MCF 10A (cell line): ENCODE measurements at regions of chr14 and their contacts with region 1.

Region 1: DNA sequence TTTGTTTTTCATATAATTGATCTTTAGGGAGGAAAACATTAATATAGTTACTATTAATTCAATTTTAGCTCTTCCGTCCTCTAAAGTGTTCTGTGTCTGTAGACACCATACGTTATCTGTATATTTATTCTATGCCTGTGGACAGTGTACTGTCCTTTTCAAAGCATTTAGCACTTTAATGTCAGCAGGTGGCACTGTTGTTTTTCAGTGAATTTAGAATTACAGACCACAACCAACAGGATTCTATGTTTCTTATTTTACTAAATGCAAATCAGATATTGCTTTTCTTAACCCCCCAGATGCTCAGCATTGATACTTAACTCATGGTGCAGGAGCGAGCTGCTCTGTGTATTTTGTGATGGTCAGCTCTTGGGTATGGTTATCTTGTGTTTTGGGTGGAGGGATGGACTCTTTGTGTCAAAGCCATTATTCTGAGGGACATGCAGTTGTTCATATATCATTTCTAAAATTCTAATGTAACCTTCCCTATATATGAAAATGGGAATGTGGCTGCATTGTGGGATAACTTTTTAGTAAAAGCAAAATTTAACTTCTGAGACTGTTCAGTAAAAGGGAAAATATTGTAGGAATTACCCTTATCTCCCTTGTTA is 65.2 kb downstream of the PAPOLA start:
- DNase-seq: peak; percentile 31
- H3K4me3 Mint-ChIP-seq: no peak overlapping the region
- H3K27ac Mint-ChIP-seq: no peak overlapping the region
- H3K4me1 Mint-ChIP-seq: no peaks in the 10 kb centered on the region
- H3K27me3 Mint-ChIP-seq: no peaks in the 10 kb centered on the region
- CTCF ChIP-seq: peak; percentile 60

Region 2: DNA sequence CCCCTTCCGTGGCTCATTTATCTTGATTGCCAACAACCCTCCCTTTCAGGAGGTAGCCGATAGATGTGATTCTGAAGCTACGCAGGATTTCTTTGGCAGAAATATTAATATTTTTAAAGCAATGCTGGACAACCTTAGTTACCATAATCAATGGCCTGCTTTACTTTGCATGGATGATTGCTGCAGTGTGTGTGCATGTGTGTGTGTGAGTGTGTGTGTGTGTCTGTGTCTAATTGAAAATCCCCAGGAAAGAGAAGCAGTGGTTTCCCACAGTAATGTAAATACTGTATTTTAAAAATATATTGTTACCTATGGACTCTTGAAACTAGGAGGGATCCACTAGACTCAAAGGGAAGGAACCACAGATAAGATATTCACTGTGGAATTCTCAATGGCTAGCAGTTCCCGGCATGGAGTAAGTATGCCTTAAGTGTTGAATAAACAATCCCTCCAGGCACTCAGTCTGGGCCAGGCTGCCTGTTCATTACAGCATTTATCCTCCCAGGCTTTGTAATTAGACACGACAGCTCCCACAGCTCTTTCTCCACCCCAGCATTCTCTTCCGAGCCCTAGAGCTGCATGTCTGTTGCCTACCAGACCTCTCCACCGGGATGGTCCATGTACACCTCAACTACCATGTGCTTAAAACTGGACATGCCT is 550.8 kb before region 1 on chr14:
- CTCF ChIA-PET with region 1: no interaction called
- POLR2A ChIA-PET with region 1: no interaction called
- intact Hi-C with region 1: no loop called
- DNase-seq: no peak
- H3K4me3 Mint-ChIP-seq: no peak overlapping the region
- H3K27ac Mint-ChIP-seq: no peak overlapping the region
- H3K4me1 Mint-ChIP-seq: no peaks in the 10 kb centered on the region
- H3K27me3 Mint-ChIP-seq: peaks cover 68% of the 10 kb centered on the region
- CTCF ChIP-seq: no peak

Region 3: DNA sequence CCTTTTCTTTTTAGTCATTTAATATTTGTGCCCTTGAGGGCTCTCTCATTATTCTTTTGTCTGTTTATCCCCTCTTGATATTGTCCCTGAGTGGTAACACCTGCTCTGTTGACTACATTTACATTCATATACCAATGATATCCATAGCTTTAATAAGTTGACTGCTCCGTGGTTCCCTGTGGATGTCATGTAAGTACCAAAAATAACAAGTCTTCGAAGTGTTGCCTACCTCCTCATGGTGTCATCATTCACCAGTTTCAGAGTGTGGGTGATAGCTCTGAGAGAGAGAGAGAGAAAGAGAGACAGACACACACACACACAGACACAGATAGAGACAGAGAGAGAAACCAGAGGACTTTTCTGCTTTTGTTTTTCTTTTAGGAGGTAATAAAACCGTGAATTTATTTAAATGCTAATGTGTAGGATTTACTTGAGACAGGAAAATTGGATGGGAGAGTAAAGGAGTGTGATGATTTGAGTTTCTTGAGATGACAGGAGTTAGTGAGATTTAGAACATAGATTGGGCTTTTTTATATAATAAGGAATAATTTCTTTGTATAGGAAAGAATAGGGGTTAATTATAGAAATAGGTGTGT is 13.0 kb before region 1 on chr14:
- CTCF ChIA-PET with region 1: interaction called, 10 read pairs
- POLR2A ChIA-PET with region 1: interaction called, 4 read pairs
- intact Hi-C with region 1: no loop called
- DNase-seq: no peak
- H3K4me3 Mint-ChIP-seq: no peak overlapping the region
- H3K27ac Mint-ChIP-seq: peak overlapping the region; percentile 17
- H3K4me1 Mint-ChIP-seq: no peaks in the 10 kb centered on the region
- H3K27me3 Mint-ChIP-seq: no peaks in the 10 kb centered on the region
- CTCF ChIP-seq: no peak

Region 4: DNA sequence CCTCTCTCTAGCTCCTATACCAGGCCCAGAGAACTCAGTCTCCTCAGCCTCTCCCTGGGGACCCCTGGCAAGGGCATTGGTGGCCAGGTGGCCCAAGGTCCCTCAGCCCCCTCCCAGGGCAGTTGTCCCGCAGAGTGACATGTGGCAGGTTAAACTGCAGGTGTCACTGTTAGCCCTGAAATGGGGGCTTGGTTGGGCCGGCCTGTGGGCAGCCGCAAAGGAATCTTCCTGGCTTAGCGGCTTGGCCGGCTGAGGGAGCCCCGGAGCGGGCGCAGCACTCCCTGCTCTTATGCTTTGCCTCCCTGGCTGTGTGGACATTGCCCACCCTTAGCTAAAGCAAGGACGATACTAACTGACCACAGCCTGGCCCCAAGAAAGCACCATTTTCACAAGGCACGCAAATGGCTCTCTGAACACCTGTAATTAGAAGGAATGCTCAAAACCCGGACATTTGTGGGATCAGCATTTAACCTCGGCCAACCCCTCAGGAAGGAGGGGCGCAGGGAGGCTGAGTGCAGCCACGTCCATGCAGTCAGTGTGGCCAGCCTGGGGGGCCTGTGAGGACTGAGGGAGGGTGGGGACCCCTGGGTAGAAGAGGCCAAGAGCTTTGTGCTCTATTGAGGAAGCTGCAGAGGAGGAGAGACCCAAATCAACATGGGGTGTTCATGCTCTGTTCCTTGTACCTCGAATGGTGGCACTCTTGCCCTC is 17.0 kb after region 1 on chr14:
- CTCF ChIA-PET with region 1: interaction called, 46 read pairs
- POLR2A ChIA-PET with region 1: interaction called, 3 read pairs
- intact Hi-C with region 1: no loop called
- DNase-seq: peak; percentile 61
- H3K4me3 Mint-ChIP-seq: no peak overlapping the region
- H3K27ac Mint-ChIP-seq: no peak overlapping the region
- H3K4me1 Mint-ChIP-seq: no peaks in the 10 kb centered on the region
- H3K27me3 Mint-ChIP-seq: no peaks in the 10 kb centered on the region
- CTCF ChIP-seq: peak; percentile 44

Region 5: GRCh38 chr14:96688629-96689028 is 121.2 kb after region 1 on chr14:
- CTCF ChIA-PET with region 1: no interaction called
- POLR2A ChIA-PET with region 1: no interaction called
- intact Hi-C with region 1: no loop called
- DNase-seq: no peak
- H3K4me3 Mint-ChIP-seq: no peak overlapping the region
- H3K27ac Mint-ChIP-seq: no peak overlapping the region
- H3K4me1 Mint-ChIP-seq: no peaks in the 10 kb centered on the region
- H3K27me3 Mint-ChIP-seq: peaks cover 27% of the 10 kb centered on the region
- CTCF ChIP-seq: no peak

Region 6: GRCh38 chr14:96741151-96741977 is 174.0 kb after region 1 on chr14:
- CTCF ChIA-PET with region 1: interaction called, 42 read pairs
- POLR2A ChIA-PET with region 1: interaction called, 4 read pairs
- intact Hi-C with region 1: loop called (anchors 5 kb)
- DNase-seq: peak; percentile 43
- H3K4me3 Mint-ChIP-seq: peak overlapping the region; percentile 79
- H3K27ac Mint-ChIP-seq: no peak overlapping the region
- H3K4me1 Mint-ChIP-seq: peaks cover 6% of the 10 kb centered on the region
- H3K27me3 Mint-ChIP-seq: peaks cover 62% of the 10 kb centered on the region
- CTCF ChIP-seq: peak; percentile 96

Region 7: DNA sequence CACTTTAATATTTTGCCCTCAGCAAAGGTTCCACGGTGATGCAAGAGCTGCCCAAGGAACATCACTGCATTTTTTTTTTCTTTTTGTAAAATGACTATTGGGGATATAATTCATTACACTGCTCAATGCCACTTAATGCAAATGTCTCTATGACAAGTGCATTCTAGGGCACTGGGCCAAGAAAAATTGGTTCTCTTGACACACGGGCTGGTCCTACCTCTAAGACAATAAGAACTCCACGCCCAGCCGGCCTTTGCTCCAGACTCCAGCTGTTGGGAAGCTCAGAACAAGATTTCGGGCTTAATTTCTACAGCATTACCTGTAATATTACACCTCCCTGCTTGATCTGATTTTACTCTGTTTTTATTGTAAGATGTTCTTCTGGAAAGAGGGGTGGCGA is 181.0 kb after region 1 on chr14:
- CTCF ChIA-PET with region 1: interaction called, 11 read pairs
- POLR2A ChIA-PET with region 1: no interaction called
- intact Hi-C with region 1: loop called (anchors 5 kb)
- DNase-seq: peak; percentile 38
- H3K4me3 Mint-ChIP-seq: no peak overlapping the region
- H3K27ac Mint-ChIP-seq: no peak overlapping the region
- H3K4me1 Mint-ChIP-seq: no peaks in the 10 kb centered on the region
- H3K27me3 Mint-ChIP-seq: peaks cover 26% of the 10 kb centered on the region
- CTCF ChIP-seq: no peak